ENCODE measurements at regions of chr15 and their contacts with region 1.

Region 1: DNA sequence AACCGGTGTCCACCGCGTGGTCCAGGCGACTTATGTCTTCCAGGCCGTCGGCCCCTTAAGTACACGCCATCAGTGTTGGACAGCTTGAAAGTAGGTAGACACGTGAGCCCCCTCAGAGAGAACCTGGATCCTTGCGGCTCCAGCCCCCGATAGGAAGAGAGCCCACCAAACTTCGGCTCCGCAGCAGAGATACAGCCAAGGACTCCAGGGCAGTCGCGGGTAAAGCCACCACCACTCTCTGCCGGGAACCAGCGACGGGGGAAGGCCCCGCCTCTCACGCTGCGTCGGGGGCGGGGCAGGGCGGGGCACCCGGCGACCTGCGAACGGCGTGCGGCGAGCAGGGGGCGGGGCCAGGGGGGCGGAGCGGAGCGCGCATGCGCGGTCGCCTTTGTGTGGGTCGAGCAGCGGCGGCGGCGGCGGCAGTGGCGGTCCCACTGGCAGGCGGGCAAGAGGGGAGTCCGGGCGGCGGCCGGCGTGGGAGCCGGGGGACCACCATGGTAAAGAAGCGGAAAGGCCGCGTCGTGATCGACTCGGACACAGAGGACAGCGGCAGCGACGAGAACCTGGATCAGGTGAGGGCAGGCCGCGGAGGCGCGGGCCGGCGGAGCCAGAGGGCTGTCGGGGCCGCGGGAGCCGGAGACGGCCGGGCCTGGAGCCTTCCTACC is at the start of gene RTF1:
- DNase-seq: peak; percentile 96
- H3K4me3 Mint-ChIP-seq: peak within 1 kb of the TSS; percentile 92
- H3K27ac Mint-ChIP-seq: peak within 1 kb of the TSS; percentile 88
- H3K4me1 Mint-ChIP-seq: peaks cover 37% of the 10 kb centered on the region
- H3K27me3 Mint-ChIP-seq: no peaks in the 10 kb centered on the region
- total RNA-seq, gene RTF1: 33.9 to 37.1 TPM

Region 2: DNA sequence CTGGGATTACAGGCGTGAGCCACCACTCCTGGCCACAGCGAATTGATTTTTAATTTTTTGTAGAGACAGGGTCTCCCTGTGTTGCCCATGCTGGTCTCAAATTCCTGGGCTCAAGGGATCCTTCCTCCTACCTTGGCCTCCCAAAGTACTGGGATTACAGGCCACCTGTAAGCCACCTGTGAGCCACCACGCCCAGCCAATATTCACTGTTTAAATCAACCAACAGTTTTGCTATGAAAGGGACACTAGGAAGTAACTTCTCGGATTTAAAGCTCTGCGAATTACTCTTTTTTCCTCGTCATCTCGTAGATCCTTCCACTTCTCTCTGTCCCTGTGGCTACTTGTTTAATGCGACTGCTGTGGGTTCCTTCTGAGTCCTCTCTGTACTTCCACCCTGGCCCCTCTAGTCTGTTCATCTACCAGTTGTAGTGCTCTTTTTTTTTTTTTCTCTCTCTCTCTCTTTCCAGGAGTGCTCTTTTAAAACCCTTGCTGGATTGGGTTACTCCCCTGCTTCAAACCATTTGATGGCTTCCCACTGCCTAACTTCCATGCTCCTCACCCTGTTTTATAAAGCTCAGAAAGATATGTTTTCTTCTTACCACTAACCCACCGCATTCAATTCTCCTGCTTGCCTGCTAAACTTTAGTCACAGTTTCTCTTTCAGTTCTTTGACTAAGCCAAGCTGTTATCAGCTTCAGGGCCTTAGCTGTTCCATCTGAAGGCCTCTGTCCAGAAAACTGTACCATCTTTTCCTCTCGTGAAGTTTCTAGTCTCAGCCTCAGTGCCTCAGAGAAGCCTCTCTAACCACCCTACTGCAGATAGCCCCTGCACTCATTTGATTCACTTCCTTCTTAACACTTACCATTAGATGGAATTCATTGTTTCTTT is 12.4 kb after region 1 on chr15:
- CTCF ChIA-PET with region 1: interaction called, 3 read pairs
- POLR2A ChIA-PET with region 1: interaction called, 17 read pairs
- DNase-seq: peak; percentile 28
- H3K4me3 Mint-ChIP-seq: peak overlapping the region; percentile 51
- H3K27ac Mint-ChIP-seq: peak overlapping the region; percentile 86
- H3K4me1 Mint-ChIP-seq: peaks cover 32% of the 10 kb centered on the region
- H3K27me3 Mint-ChIP-seq: no peaks in the 10 kb centered on the region